Colonic mucosa (tissue), 4 donors: ENCODE measurements at regions of chr3 and their contacts with region 1.

Region 1: GRCh38 chr3:156655819-156656550 is 18.4 kb upstream of the TIPARP start:
- DNase-seq: no peak
- H3K4me3 ChIP-seq: no peak overlapping the region
- H3K27ac ChIP-seq: no peak overlapping the region
- H3K4me1 ChIP-seq: no peaks in the 10 kb centered on the region
- H3K27me3 ChIP-seq: no peaks in the 10 kb centered on the region
- CTCF ChIP-seq: no peak

Region 2: GRCh38 chr3:156563900-156564682 is 91.9 kb before region 1 on chr3:
- intact Hi-C with region 1: loop called (anchors 10 kb)
- DNase-seq: no peak
- H3K4me3 ChIP-seq: no peak overlapping the region
- H3K27ac ChIP-seq: peak overlapping the region; percentile 26
- H3K4me1 ChIP-seq: no peaks in the 10 kb centered on the region
- H3K27me3 ChIP-seq: no peaks in the 10 kb centered on the region
- CTCF ChIP-seq: no peak

Region 3: GRCh38 chr3:156795890-156796481 is 140.0 kb after region 1 on chr3:
- intact Hi-C with region 1: no loop called
- DNase-seq: no peak
- H3K4me3 ChIP-seq: no peak overlapping the region
- H3K27ac ChIP-seq: no peak overlapping the region
- H3K4me1 ChIP-seq: no peaks in the 10 kb centered on the region
- H3K27me3 ChIP-seq: no peaks in the 10 kb centered on the region
- CTCF ChIP-seq: no peak